ENCODE measurements at regions of chr1 and their contacts with region 1.

Region 1: GRCh38 chr1:6199298-6200187 is at the start of gene RPL22:
- DNase-seq: peak; percentile 99
- H3K4me3 Mint-ChIP-seq: peak within 1 kb of the TSS; percentile 90
- H3K27ac Mint-ChIP-seq: peak within 1 kb of the TSS; percentile 91
- H3K4me1 Mint-ChIP-seq: peaks cover 39% of the 10 kb centered on the region
- H3K27me3 Mint-ChIP-seq: no peaks in the 10 kb centered on the region
- total RNA-seq, gene RPL22: 395 to 433 TPM

Region 2: GRCh38 chr1:5992026-5992813 is 207.3 kb before region 1 on chr1 and contains the start of gene NPHP4:
- CTCF ChIA-PET with region 1: no interaction called
- POLR2A ChIA-PET with region 1: no interaction called
- intact Hi-C with region 1: loop called (anchors 1 kb)
- DNase-seq: peak; percentile 100
- H3K4me3 Mint-ChIP-seq: peak within 1 kb of the TSS; percentile 86
- H3K27ac Mint-ChIP-seq: peak within 1 kb of the TSS; percentile 88
- H3K4me1 Mint-ChIP-seq: peaks cover 21% of the 10 kb centered on the region
- H3K27me3 Mint-ChIP-seq: no peaks in the 10 kb centered on the region
- total RNA-seq, gene NPHP4: 14.0 to 14.6 TPM

Region 3: GRCh38 chr1:6026095-6026809 is 173.3 kb before region 1 on chr1:
- CTCF ChIA-PET with region 1: no interaction called
- POLR2A ChIA-PET with region 1: interaction called, 4 read pairs
- intact Hi-C with region 1: loop called (anchors 2 kb)
- DNase-seq: peak; percentile 97
- H3K4me3 Mint-ChIP-seq: peak overlapping the region; percentile 96
- H3K27ac Mint-ChIP-seq: peak overlapping the region; percentile 97
- H3K4me1 Mint-ChIP-seq: peaks cover 43% of the 10 kb centered on the region
- H3K27me3 Mint-ChIP-seq: no peaks in the 10 kb centered on the region

Region 4: GRCh38 chr1:6180212-6180575 is 19.3 kb before region 1 on chr1 and contains the start of gene CHD5:
- CTCF ChIA-PET with region 1: interaction called, 17 read pairs
- POLR2A ChIA-PET with region 1: no interaction called
- intact Hi-C with region 1: loop called (anchors 2 kb)
- DNase-seq: no peak
- H3K4me3 Mint-ChIP-seq: no peak within 1 kb of the TSS
- H3K27ac Mint-ChIP-seq: no peak within 1 kb of the TSS
- H3K4me1 Mint-ChIP-seq: peaks cover 30% of the 10 kb centered on the region
- H3K27me3 Mint-ChIP-seq: peaks cover 43% of the 10 kb centered on the region
- total RNA-seq, gene CHD5: 0.38 to 0.51 TPM

Region 5: GRCh38 chr1:6185635-6186382 is 13.7 kb before region 1 on chr1:
- CTCF ChIA-PET with region 1: interaction called, 17 read pairs
- POLR2A ChIA-PET with region 1: interaction called, 4 read pairs
- intact Hi-C with region 1: loop called (anchors 2 kb)
- DNase-seq: peak; percentile 49
- H3K4me3 Mint-ChIP-seq: no peak overlapping the region
- H3K27ac Mint-ChIP-seq: peak overlapping the region; percentile 15
- H3K4me1 Mint-ChIP-seq: peaks cover 44% of the 10 kb centered on the region
- H3K27me3 Mint-ChIP-seq: peaks cover 13% of the 10 kb centered on the region

Region 6: GRCh38 chr1:6235296-6235677 is 35.7 kb after region 1 on chr1:
- CTCF ChIA-PET with region 1: interaction called, 7 read pairs
- POLR2A ChIA-PET with region 1: interaction called, 16 read pairs
- intact Hi-C with region 1: loop called (anchors 2 kb)
- DNase-seq: peak; percentile 34
- H3K4me3 Mint-ChIP-seq: peak overlapping the region; percentile 89
- H3K27ac Mint-ChIP-seq: peak overlapping the region; percentile 71
- H3K4me1 Mint-ChIP-seq: peaks cover 19% of the 10 kb centered on the region
- H3K27me3 Mint-ChIP-seq: peaks cover 10% of the 10 kb centered on the region

Region 7: GRCh38 chr1:6267686-6268322 is 68.3 kb after region 1 on chr1:
- CTCF ChIA-PET with region 1: no interaction called
- POLR2A ChIA-PET with region 1: no interaction called
- intact Hi-C with region 1: no loop called
- DNase-seq: no peak
- H3K4me3 Mint-ChIP-seq: no peak overlapping the region
- H3K27ac Mint-ChIP-seq: no peak overlapping the region
- H3K4me1 Mint-ChIP-seq: no peaks in the 10 kb centered on the region
- H3K27me3 Mint-ChIP-seq: no peaks in the 10 kb centered on the region

Region 8: GRCh38 chr1:6538956-6539355 is 339.4 kb after region 1 on chr1:
- CTCF ChIA-PET with region 1: no interaction called
- POLR2A ChIA-PET with region 1: no interaction called
- intact Hi-C with region 1: no loop called
- DNase-seq: no peak
- H3K4me3 Mint-ChIP-seq: no peak overlapping the region
- H3K27ac Mint-ChIP-seq: no peak overlapping the region
- H3K4me1 Mint-ChIP-seq: peaks cover 3% of the 10 kb centered on the region
- H3K27me3 Mint-ChIP-seq: no peaks in the 10 kb centered on the region